ENCODE measurements at regions of chr17 and their contacts with region 1.

Region 1: GRCh38 chr17:45135192-45135977 is at the start of gene ACBD4:
- DNase-seq: peak; percentile 98
- H3K4me3 ChIP-seq: peak within 1 kb of the TSS; percentile 3 to 69 (median 53)
- H3K27ac ChIP-seq: peak within 1 kb of the TSS; percentile 14
- H3K4me1 ChIP-seq: peaks cover 17% of the 10 kb centered on the region
- H3K27me3 ChIP-seq: no peaks in the 10 kb centered on the region
- CTCF ChIP-seq: peak; percentile 100
- POLR2A ChIP-seq: peak; percentile 50
- total RNA-seq, gene ACBD4: 6.7 and 7.5 TPM in 2 replicates

Region 2: GRCh38 chr17:44820631-44821212 is 314.7 kb before region 1 on chr17:
- CTCF ChIA-PET with region 1: no interaction called
- POLR2A ChIA-PET with region 1: no interaction called
- dilution Hi-C with region 1: no loop called
- intact Hi-C with region 1: no loop called
- DNase-seq: peak; percentile 80
- H3K4me3 ChIP-seq: peak overlapping the region in 1 of 3 experiments; percentile 21
- H3K27ac ChIP-seq: peak overlapping the region; percentile 57
- H3K4me1 ChIP-seq: peaks cover 17% of the 10 kb centered on the region
- H3K27me3 ChIP-seq: no peaks in the 10 kb centered on the region
- CTCF ChIP-seq: no peak
- POLR2A ChIP-seq: no peak

Region 3: DNA sequence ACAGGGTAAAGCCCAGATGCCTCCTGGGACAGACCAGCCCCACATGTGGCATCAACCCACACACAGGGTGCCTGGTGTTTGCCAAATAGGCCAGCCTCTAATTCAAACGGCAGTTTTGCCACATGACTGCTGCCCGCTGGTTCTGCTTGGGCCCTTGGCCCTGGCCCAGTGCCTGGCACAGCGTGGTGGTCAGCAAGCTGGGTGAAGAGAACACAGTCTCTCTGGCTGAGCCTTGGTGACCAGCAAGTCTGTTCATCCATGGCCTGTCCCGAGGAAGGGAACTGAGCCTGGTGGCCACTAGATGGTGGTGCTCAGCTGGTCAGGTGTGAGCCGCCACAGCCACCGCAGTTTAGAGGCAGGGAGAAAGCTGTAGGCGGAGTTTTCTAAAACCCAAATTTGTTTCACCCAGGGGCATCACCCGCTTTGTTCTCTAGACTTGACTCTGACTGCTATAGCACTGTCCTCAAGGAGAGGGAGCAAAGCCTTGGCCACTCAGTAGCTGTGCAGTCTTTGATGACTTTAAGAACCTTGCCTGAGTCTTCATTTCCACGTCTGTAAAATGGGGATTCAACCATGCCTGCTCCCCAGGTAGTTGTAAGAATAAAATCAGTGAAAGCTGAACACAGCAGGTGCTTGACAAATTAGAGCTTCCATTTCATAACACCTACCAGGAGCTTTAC is 215.4 kb before region 1 on chr17:
- CTCF ChIA-PET with region 1: interaction called, 17 read pairs
- POLR2A ChIA-PET with region 1: no interaction called
- dilution Hi-C with region 1: no loop called
- intact Hi-C with region 1: loop called (anchors 1 kb)
- DNase-seq: peak; percentile 76
- H3K4me3 ChIP-seq: no peak overlapping the region
- H3K27ac ChIP-seq: no peak overlapping the region
- H3K4me1 ChIP-seq: peaks cover 8% of the 10 kb centered on the region
- H3K27me3 ChIP-seq: peaks cover 0 to 11% of the 10 kb centered on the region in 2 experiments
- CTCF ChIP-seq: peak; percentile 75 to 84
- POLR2A ChIP-seq: no peak

Region 4: GRCh38 chr17:44997733-44998520 is 137.5 kb before region 1 on chr17:
- CTCF ChIA-PET with region 1: no interaction called
- POLR2A ChIA-PET with region 1: no interaction called
- dilution Hi-C with region 1: no loop called
- intact Hi-C with region 1: no loop called
- DNase-seq: no peak
- H3K4me3 ChIP-seq: no peak overlapping the region
- H3K27ac ChIP-seq: no peak overlapping the region
- H3K4me1 ChIP-seq: no peaks in the 10 kb centered on the region
- H3K27me3 ChIP-seq: peaks cover 0 to 16% of the 10 kb centered on the region in 2 experiments
- CTCF ChIP-seq: no peak
- POLR2A ChIP-seq: no peak

Region 5: GRCh38 chr17:45067637-45068036 is 67.7 kb before region 1 on chr17:
- CTCF ChIA-PET with region 1: interaction called, 11 read pairs
- POLR2A ChIA-PET with region 1: no interaction called
- dilution Hi-C with region 1: no loop called
- intact Hi-C with region 1: no loop called
- DNase-seq: no peak
- H3K4me3 ChIP-seq: no peak overlapping the region
- H3K27ac ChIP-seq: no peak overlapping the region
- H3K4me1 ChIP-seq: peaks cover 18% of the 10 kb centered on the region
- H3K27me3 ChIP-seq: no peaks in the 10 kb centered on the region
- CTCF ChIP-seq: no peak
- POLR2A ChIP-seq: no peak

Region 6: GRCh38 chr17:45115871-45116724 is 19.3 kb before region 1 on chr17:
- CTCF ChIA-PET with region 1: interaction called, 34 read pairs
- POLR2A ChIA-PET with region 1: no interaction called
- dilution Hi-C with region 1: no loop called
- intact Hi-C with region 1: no loop called
- DNase-seq: no peak
- H3K4me3 ChIP-seq: no peak overlapping the region
- H3K27ac ChIP-seq: no peak overlapping the region
- H3K4me1 ChIP-seq: no peaks in the 10 kb centered on the region
- H3K27me3 ChIP-seq: no peaks in the 10 kb centered on the region
- CTCF ChIP-seq: no peak
- POLR2A ChIP-seq: no peak

Region 7: GRCh38 chr17:45172454-45173286 is 37.3 kb after region 1 on chr17:
- CTCF ChIA-PET with region 1: interaction called, 34 read pairs
- POLR2A ChIA-PET with region 1: interaction called, 3 read pairs
- dilution Hi-C with region 1: no loop called
- intact Hi-C with region 1: no loop called
- DNase-seq: no peak
- H3K4me3 ChIP-seq: no peak overlapping the region
- H3K27ac ChIP-seq: no peak overlapping the region
- H3K4me1 ChIP-seq: peaks cover 14% of the 10 kb centered on the region
- H3K27me3 ChIP-seq: no peaks in the 10 kb centered on the region
- CTCF ChIP-seq: no peak
- POLR2A ChIP-seq: no peak

Region 8: GRCh38 chr17:45228763-45229539 is 93.6 kb after region 1 on chr17:
- CTCF ChIA-PET with region 1: interaction called, 51 read pairs
- POLR2A ChIA-PET with region 1: no interaction called
- dilution Hi-C with region 1: no loop called
- intact Hi-C with region 1: no loop called
- DNase-seq: no peak
- H3K4me3 ChIP-seq: no peak overlapping the region
- H3K27ac ChIP-seq: no peak overlapping the region
- H3K4me1 ChIP-seq: peaks cover 8% of the 10 kb centered on the region
- H3K27me3 ChIP-seq: no peaks in the 10 kb centered on the region
- CTCF ChIP-seq: no peak
- POLR2A ChIP-seq: no peak